Activated CD8-positive, alpha-beta memory T cell treated with anti-CD3 and anti-CD28 coated beads, Interleukin-2, amount 10 ng/mL, durations not matched to agents 7 days and 5 days (primary cell): ENCODE measurements at regions of chr2 and their contacts with region 1.

Region 1: GRCh38 chr2:64750817-64751285 is 97.1 kb upstream of the SERTAD2 start:
- DNase-seq: peak; percentile 99
- ATAC-seq: peak; percentile 88
- H3K4me3 Mint-ChIP-seq: peak overlapping the region; percentile 80
- H3K27ac Mint-ChIP-seq: peak overlapping the region; percentile 99
- H3K4me1 Mint-ChIP-seq: peaks cover 22% of the 10 kb centered on the region
- H3K27me3 Mint-ChIP-seq: no peaks in the 10 kb centered on the region

Region 2: DNA sequence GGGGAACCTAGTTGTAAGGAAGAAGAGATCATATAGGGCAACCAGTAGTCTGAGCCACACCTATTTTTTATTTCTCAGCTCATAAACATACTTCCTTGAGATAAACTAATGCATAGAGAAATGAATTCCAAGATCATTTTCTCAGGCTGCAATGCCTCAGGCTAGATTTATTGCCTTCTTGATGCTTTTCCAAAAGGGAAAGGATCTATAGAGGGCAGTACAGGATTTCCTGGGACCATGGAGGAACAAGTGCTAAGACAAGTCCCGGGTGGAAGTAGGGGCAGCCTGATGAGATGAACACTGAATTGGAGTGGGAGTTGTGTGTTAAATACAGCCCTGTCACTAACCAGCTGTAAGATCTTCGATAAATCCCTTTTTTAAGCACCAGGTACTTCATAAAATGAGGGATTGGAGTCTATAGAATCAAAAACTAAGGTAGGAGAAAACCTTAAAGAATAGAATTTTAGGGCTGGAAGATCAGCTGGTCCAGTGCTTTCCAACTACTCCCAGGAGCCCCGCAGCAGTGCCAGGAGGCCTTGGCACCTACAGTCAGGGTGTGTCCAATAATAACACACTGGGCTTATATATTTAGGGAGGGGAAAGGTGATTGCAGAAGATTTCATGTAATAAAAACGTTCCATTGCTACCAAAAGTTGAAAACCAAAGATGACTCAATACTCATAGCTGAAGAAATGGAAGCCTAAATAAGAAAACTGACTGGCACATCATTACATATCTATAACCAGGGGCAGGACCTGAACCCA is 155.3 kb before region 1 on chr2:
- CTCF ChIA-PET with region 1: no interaction called
- DNase-seq: no peak
- ATAC-seq: no peak
- H3K4me3 Mint-ChIP-seq: no peak overlapping the region
- H3K27ac Mint-ChIP-seq: no peak overlapping the region
- H3K4me1 Mint-ChIP-seq: peaks cover 8% of the 10 kb centered on the region
- H3K27me3 Mint-ChIP-seq: no peaks in the 10 kb centered on the region

Region 3: DNA sequence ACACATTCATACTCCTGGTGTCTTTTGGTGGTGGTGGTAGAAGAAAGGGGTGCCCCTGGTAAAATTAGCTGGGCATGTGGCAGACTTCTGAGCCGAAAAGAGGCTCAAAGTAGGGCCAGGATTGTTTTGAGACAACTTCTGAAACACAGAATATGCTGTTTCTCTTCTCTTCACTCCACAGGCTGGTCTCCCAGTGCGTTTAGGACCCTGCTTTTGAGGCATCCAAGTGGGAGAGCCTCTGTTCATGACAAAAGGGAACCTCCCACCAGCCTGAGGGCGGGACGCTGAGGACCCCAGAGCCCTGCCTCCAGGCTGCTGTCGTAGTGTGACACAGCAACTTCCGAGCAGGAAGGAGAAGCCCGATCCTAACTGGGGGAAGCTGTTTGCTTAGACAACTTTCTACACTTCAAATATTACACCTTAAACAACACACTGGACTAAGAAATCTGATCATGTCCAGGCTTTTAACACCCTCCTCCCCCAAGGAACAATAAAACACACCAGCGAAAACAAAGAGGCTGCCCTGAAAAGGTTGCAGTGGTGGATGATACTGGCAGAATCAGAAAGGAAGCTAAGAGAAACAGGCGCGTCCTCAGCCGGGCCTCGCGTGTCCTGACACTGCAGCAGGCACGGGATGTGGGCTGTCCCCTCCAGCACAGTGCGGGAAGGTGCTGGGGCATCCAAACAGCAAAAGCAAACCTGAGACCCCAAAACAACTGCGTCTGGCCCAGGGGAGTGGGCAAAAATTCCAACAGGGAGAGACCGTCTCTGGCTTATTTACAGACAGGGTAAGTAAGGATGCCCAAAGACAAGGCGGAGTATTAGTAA is 106.5 kb before region 1 on chr2:
- CTCF ChIA-PET with region 1: interaction called, 42 read pairs
- DNase-seq: peak; percentile 83
- ATAC-seq: peak; percentile 84
- H3K4me3 Mint-ChIP-seq: peak overlapping the region; percentile 85
- H3K27ac Mint-ChIP-seq: peak overlapping the region; percentile 93
- H3K4me1 Mint-ChIP-seq: peaks cover 77% of the 10 kb centered on the region
- H3K27me3 Mint-ChIP-seq: no peaks in the 10 kb centered on the region

Region 4: GRCh38 chr2:64653349-64654062 is 97.3 kb before region 1 on chr2 and contains the start of gene SERTAD2:
- CTCF ChIA-PET with region 1: interaction called, 69 read pairs
- DNase-seq: peak; percentile 88
- ATAC-seq: peak; percentile 89
- H3K4me3 Mint-ChIP-seq: peak within 1 kb of the TSS; percentile 83
- H3K27ac Mint-ChIP-seq: peak within 1 kb of the TSS; percentile 91
- H3K4me1 Mint-ChIP-seq: peaks cover 53% of the 10 kb centered on the region
- H3K27me3 Mint-ChIP-seq: no peaks in the 10 kb centered on the region
- total RNA-seq, gene SERTAD2: 24.3 to 53.7 TPM

Region 5: GRCh38 chr2:64730551-64731262 is 20.1 kb before region 1 on chr2:
- CTCF ChIA-PET with region 1: interaction called, 15 read pairs
- DNase-seq: peak; percentile 68
- ATAC-seq: peak; percentile 61
- H3K4me3 Mint-ChIP-seq: peak overlapping the region; percentile 72
- H3K27ac Mint-ChIP-seq: peak overlapping the region; percentile 90
- H3K4me1 Mint-ChIP-seq: peaks cover 67% of the 10 kb centered on the region
- H3K27me3 Mint-ChIP-seq: no peaks in the 10 kb centered on the region

Region 6: GRCh38 chr2:64737547-64737946 is 13.3 kb before region 1 on chr2:
- CTCF ChIA-PET with region 1: interaction called, 21 read pairs
- DNase-seq: no peak
- ATAC-seq: peak; percentile 91
- H3K4me3 Mint-ChIP-seq: peak overlapping the region; percentile 18
- H3K27ac Mint-ChIP-seq: peak overlapping the region; percentile 75
- H3K4me1 Mint-ChIP-seq: peaks cover 45% of the 10 kb centered on the region
- H3K27me3 Mint-ChIP-seq: no peaks in the 10 kb centered on the region

Region 7: DNA sequence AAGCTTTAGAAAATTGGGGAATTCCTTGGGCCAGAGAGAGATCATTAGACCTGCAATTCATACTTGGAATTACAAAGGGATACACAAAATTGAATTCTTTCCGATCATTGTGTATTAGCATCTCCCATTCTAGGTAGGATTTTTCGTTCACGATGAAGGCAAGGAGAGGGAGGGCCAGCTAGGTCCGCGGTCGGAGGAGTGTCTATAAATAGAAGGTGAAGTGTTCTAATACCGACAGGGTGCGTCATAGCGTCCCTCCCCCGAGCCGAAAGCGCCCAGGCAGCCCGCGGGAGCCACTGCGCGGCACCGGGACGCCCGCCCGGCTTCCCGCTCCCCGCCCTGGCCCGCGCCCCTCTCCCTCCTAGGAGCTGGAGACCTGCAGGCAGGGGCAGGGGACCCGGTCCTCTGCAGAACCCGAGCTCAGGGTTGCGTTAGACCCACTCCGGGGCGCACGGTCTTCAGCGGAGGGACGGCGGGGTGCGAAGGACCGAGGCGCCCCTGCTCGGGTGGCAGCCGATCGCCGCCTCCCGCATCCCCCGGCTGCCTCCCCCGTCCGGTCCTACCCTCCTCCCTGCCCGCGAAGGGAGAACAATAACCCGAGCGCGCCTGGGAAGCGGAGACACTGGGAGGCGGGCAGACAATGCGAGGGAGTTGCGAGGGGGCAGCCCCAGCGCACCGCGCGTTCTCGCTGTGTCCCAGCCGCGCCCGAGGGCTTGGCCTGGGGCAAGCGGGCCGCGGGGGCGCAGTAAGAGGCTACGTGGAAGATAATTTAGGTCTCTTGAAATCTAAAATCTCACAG is 17.0 kb after region 1 on chr2:
- CTCF ChIA-PET with region 1: interaction called, 19 read pairs
- DNase-seq: peak; percentile 92
- ATAC-seq: peak; percentile 91
- H3K4me3 Mint-ChIP-seq: peak overlapping the region; percentile 92
- H3K27ac Mint-ChIP-seq: peak overlapping the region; percentile 96
- H3K4me1 Mint-ChIP-seq: peaks cover 25% of the 10 kb centered on the region
- H3K27me3 Mint-ChIP-seq: peaks cover 4% of the 10 kb centered on the region

Region 8: DNA sequence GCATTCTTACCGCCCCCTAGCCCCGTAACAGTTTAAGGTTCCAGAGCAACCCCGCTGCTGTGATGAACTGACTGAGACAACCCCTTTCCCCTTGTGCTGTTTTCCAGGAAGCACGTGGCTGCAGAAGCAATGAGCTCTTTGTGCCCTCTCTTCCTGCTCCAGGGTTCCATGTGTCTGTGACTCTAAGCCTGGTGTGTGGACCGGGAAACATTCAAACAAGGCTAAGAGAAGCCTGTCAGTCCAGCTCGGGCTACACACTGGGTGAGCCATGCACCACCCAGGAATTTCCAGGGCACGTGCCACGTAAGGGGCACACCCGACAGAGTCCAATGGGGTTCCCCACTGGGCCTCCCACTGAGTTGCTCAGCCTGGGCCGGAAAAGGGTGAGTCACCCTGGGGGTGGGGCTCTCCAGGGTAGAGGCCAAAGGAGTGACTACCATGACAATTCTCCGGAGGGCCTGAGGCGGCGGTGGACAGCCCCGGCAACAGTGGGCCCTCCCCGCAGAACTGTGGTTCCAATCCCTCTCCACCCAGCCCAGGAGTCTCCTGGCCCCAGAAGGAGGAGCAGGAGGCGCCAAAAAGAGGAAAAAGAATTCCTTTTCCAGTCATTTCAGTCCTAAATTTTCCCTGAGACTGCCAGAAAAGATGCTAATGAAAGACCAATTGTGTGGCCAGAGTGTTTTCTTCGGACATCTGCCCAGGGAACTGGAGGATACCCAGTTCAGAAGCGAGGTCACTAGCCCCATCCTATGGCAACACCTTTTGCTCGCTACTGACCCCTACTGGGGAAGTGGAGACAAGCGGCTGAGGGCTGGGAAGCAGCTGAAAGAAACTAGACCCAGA is 80.5 kb after region 1 on chr2:
- CTCF ChIA-PET with region 1: interaction called, 46 read pairs
- DNase-seq: peak; percentile 91
- ATAC-seq: peak; percentile 97
- H3K4me3 Mint-ChIP-seq: peak overlapping the region; percentile 52
- H3K27ac Mint-ChIP-seq: peak overlapping the region; percentile 83
- H3K4me1 Mint-ChIP-seq: peaks cover 21% of the 10 kb centered on the region
- H3K27me3 Mint-ChIP-seq: peaks cover 10% of the 10 kb centered on the region